Naive thymus-derived CD4-positive, alpha-beta T cell (primary cell): ENCODE measurements at regions of chr10 and their contacts with region 1.

Region 1: DNA sequence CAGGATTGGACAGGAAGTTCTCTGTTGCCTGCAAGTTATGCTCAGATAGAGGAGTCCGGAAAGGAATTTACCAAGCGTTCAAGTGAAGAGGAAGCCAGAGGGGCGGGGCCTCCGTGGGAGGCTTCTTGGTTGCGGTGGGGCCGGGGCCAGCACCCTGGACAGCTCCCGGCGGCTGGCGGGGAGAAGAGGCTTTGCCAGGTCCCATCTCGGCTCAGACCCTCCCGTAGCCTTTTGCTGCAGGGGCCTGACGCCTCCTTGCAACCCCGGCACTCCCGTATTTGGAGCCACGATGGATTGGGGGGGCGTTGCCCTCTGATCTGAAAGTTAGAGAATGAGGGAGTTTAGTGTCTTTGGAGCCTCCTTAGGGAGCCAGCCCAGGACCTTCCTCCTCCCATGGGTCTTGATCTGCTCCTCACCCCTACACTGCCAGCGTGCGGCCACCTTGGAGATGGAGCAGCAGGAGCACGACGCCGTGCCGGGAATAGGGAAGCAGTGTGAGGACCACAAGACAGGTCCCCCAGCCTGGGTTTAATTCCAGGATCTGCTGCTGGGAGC is 3.1 kb upstream of the SLC18A3 start:
- DNase-seq: peak; percentile 26 to 86 (median 58)
- ATAC-seq: peak; percentile 82
- H3K4me3 ChIP-seq: no peak overlapping the region
- H3K4me3 Mint-ChIP-seq: no peak overlapping the region
- H3K27ac ChIP-seq: no peak overlapping the region
- H3K27ac Mint-ChIP-seq: no peak overlapping the region
- H3K4me1 ChIP-seq: no peaks in the 10 kb centered on the region
- H3K4me1 Mint-ChIP-seq: peaks cover 4 to 18% (median 8%) of the 10 kb centered on the region in 7 donors
- H3K27me3 ChIP-seq: peaks cover 0 to 4% of the 10 kb centered on the region in 2 donors
- H3K27me3 Mint-ChIP-seq: peaks cover 49 to 76% (median 71%) of the 10 kb centered on the region in 5 donors

Region 2: DNA sequence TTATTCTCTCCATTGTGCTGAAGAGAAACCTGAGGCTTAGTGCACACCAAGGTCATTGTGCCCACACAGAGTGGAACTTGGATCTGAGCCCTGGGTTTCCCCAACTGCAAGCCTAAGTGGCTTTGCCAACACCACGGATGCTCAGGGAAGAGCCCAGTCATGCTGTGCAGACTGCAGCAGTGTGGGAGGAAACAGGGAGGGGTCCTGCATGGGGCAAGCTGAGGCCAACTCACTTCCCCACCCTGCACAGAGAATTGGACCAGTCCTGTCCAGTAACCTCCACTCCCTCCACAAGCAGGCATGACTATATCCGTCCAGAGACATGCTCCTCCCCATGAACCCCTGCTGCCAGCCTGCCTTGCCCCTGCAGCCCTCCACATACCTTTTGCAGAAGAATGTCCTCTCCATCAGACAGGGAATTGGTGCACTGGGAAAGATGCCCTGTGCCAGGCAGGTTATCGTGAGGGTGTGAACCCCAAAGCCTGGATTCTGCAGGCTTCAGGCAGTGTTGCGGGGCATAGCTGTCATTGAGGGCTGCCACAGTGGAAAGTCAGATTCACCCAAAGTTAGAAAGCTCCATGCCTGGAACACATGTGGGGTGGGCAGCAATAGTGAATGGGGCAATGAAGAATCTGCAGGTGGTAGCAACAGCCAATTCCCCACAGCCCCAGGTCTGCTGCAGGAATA is 256.1 kb before region 1 on chr10:
- CTCF ChIA-PET with region 1: no interaction called
- POLR2A ChIA-PET with region 1: no interaction called
- intact Hi-C with region 1: no loop called
- DNase-seq: no peak
- ATAC-seq: peak; percentile 6
- H3K4me3 ChIP-seq: no peak overlapping the region
- H3K4me3 Mint-ChIP-seq: no peak overlapping the region
- H3K27ac ChIP-seq: no peak overlapping the region
- H3K27ac Mint-ChIP-seq: no peak overlapping the region
- H3K4me1 ChIP-seq: no peaks in the 10 kb centered on the region
- H3K4me1 Mint-ChIP-seq: no peaks in the 10 kb centered on the region
- H3K27me3 ChIP-seq: no peaks in the 10 kb centered on the region
- H3K27me3 Mint-ChIP-seq: peaks cover under 1 to 31% (median 8%) of the 10 kb centered on the region in 5 donors

Region 3: DNA sequence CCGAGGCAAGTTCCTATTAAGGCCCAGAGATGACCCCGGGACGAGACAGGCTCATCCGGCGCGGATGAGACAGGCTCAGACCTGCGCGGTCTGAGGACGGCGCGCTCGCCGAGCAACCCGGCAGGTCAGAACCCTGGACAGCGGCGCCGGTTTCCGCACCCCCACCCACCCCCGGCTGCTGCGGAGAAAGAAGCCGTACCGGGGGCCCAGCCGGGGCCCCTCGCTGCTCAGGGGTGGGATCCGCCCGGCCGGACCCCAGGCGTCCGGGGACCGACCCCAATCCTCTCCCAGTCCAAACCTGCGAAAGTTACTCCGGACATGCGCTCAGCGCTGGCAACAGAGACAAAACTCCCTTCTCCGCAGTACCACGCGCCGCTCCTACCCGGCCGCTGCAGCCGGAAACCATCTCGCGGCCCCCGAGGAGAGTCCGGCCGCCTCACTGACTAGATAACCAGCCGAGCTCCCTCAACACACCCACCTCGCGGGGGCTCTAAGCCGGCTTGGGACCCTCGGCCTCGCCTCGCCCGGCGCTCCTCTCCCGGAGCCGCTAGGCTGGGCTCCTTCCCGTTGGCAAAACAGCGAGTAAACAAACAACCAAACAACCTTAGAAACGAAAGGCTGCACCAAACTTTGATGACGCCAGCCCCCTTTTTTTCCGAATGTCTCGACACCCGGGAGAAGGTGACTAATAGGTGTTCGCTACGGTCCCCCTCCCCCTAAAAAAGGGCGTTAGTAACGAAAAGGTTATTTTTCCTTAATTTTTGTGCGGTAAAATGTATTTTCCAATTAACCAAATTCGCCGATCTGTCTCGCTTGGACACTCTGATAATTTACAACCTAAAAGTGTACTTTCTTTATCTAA is 208.8 kb before region 1 on chr10:
- CTCF ChIA-PET with region 1: no interaction called
- POLR2A ChIA-PET with region 1: no interaction called
- intact Hi-C with region 1: loop called in 1 of 2 experiments (anchors 1 kb)
- DNase-seq: peak in 7 of 9 donors; percentile 9 to 72 (median 23)
- ATAC-seq: peak; percentile 85
- H3K4me3 ChIP-seq: no peak overlapping the region
- H3K4me3 Mint-ChIP-seq: peak overlapping the region in 8 of 10 donors; percentile 9 to 62 (median 40)
- H3K27ac ChIP-seq: no peak overlapping the region
- H3K27ac Mint-ChIP-seq: no peak overlapping the region
- H3K4me1 ChIP-seq: peaks cover 0 to 5% of the 10 kb centered on the region in 2 donors
- H3K4me1 Mint-ChIP-seq: peaks cover 0 to 16% (median 9%) of the 10 kb centered on the region in 7 donors
- H3K27me3 ChIP-seq: peaks cover 4 to 22% of the 10 kb centered on the region in 2 donors
- H3K27me3 Mint-ChIP-seq: peaks cover 58 to 79% (median 76%) of the 10 kb centered on the region in 5 donors

Region 4: GRCh38 chr10:49761789-49762565 is 154.9 kb after region 1 on chr10 and contains the start of gene OGDHL:
- CTCF ChIA-PET with region 1: no interaction called
- POLR2A ChIA-PET with region 1: no interaction called
- intact Hi-C with region 1: loop called in 1 of 2 experiments (anchors 1 kb)
- DNase-seq: peak in 4 of 9 donors; percentile 4 to 81 (median 19)
- ATAC-seq: peak; percentile 52
- H3K4me3 ChIP-seq: no peak within 1 kb of the TSS
- H3K4me3 Mint-ChIP-seq: peak within 1 kb of the TSS; percentile 40 to 71 (median 62)
- H3K27ac ChIP-seq: no peak within 1 kb of the TSS
- H3K27ac Mint-ChIP-seq: no peak within 1 kb of the TSS
- H3K4me1 ChIP-seq: no peaks in the 10 kb centered on the region
- H3K4me1 Mint-ChIP-seq: peaks cover 0 to 8% (median 7%) of the 10 kb centered on the region in 7 donors
- H3K27me3 ChIP-seq: no peaks in the 10 kb centered on the region
- H3K27me3 Mint-ChIP-seq: peaks cover 26 to 81% (median 51%) of the 10 kb centered on the region in 5 donors
- total RNA-seq, gene OGDHL: not detected